A673 (cell line): ENCODE measurements at regions of chr9 and their contacts with region 1.

Region 1: DNA sequence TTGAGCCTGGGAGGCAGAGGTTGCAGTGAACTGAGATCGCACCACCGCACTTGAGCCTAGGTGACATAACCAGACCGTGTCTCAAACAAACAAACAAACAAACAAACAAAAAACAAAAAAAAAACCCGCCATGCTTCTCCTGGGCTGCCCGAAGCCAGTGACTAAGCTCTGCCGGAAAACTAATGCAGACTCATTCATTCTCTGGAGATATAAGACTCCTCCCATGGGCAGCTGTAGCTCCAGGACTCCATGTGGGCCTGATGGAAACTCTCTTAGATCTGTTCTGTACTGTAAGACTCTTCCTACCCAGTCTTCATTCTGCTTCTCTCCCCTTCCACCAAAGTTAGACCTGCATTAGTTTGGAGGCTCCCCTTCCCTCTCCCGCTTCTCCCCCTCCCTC is 11.1 kb downstream of the GLDC start:
- DNase-seq: no peak
- H3K4me3 ChIP-seq: no peak overlapping the region
- H3K27ac ChIP-seq: no peak overlapping the region
- H3K4me1 ChIP-seq: no peaks in the 10 kb centered on the region
- H3K27me3 ChIP-seq: no peaks in the 10 kb centered on the region
- CTCF ChIP-seq: no peak

Region 2: DNA sequence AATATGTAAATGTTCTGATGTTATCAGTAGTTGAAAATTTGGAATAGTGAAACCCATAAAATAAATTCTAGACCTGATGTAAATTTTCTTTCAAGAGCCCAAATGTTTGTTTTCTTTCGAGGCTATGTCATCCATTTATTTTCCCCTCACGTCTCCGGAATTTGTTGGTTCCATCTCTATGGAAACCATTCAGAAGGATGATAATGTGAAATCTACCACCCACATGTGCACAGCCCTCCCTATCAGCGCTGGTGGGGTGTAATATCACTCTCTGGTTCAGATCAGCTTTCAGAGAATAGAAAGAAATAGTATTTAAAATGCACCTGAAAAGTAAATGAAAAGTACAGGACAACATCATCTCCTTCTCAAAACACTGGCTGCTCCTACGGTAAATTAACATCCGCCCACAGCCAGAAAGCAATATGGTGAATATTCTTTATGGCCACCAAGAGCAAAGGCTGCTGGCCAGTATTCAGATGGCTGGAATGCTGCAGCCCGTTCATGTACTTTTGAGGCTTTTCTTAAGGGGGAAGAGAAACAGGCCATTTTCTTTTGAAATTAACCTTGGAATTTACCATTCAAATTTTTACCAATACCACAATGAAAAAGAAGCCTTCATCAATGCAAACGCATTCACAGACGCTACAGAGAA is 17.4 kb before region 1 on chr9:
- CTCF ChIA-PET with region 1: no interaction called
- POLR2A ChIA-PET with region 1: interaction called, 16 read pairs
- intact Hi-C with region 1: no loop called
- DNase-seq: no peak
- H3K4me3 ChIP-seq: no peak overlapping the region
- H3K27ac ChIP-seq: no peak overlapping the region
- H3K4me1 ChIP-seq: no peaks in the 10 kb centered on the region
- H3K27me3 ChIP-seq: no peaks in the 10 kb centered on the region
- CTCF ChIP-seq: no peak